WTC11 (cell line): ENCODE measurements at regions of chr1 and their contacts with region 1.

Region 1: DNA sequence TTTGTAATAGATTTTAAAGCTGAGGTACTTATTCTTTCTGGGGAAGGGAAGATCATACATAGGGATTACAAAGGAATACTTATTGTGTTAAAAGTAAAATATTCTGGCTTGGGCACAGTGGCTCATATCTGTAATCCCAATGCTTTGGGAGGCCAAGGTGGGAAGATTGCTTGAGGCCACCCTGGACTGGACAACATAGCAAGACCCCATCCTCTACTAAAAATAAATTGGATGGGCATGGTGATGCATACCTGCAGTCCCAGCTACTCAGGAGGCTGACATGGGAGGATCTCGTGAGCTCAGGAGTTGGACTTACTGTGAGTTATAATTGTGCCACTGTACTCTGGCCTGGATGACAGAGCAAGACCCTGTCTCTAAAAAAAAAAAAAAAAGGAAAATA is 27.6 kb downstream of the GABPB2 start:
- DNase-seq: no peak
- ATAC-seq: no peak
- H3K4me3 Mint-ChIP-seq: no peak overlapping the region
- H3K27ac Mint-ChIP-seq: no peak overlapping the region
- H3K4me1 Mint-ChIP-seq: no peaks in the 10 kb centered on the region
- H3K27me3 Mint-ChIP-seq: no peaks in the 10 kb centered on the region; the same call in 1 of the 2 replicates
- CTCF ChIP-seq: no peak

Region 2: GRCh38 chr1:151006327-151007052 is 91.6 kb before region 1 on chr1 and contains the start of gene MINDY1:
- CTCF ChIA-PET with region 1: interaction called, 10 read pairs
- POLR2A ChIA-PET with region 1: no interaction called
- DNase-seq: peak; percentile 73
- ATAC-seq: peak; percentile 89
- H3K4me3 Mint-ChIP-seq: peak within 1 kb of the TSS; percentile 94
- H3K27ac Mint-ChIP-seq: peak within 1 kb of the TSS; percentile 99
- H3K4me1 Mint-ChIP-seq: peaks cover 38% of the 10 kb centered on the region
- H3K27me3 Mint-ChIP-seq: no peaks in the 10 kb centered on the region
- CTCF ChIP-seq: no peak
- total RNA-seq, gene MINDY1: 10.1 to 11.2 TPM (median 11.0 TPM) in 3 replicates

Region 3: GRCh38 chr1:151070474-151071276 is 27.5 kb before region 1 on chr1 and contains the start of gene GABPB2:
- CTCF ChIA-PET with region 1: interaction called, 28 read pairs
- POLR2A ChIA-PET with region 1: interaction called, 3 read pairs
- DNase-seq: peak; percentile 93
- ATAC-seq: peak; percentile 90
- H3K4me3 Mint-ChIP-seq: peak within 1 kb of the TSS; percentile 94
- H3K27ac Mint-ChIP-seq: peak within 1 kb of the TSS; percentile 100
- H3K4me1 Mint-ChIP-seq: peaks cover 10% of the 10 kb centered on the region
- H3K27me3 Mint-ChIP-seq: no peaks in the 10 kb centered on the region
- CTCF ChIP-seq: peak; percentile 97
- total RNA-seq, gene GABPB2: 1.4 to 3.3 TPM (median 1.7 TPM) in 3 replicates

Region 4: DNA sequence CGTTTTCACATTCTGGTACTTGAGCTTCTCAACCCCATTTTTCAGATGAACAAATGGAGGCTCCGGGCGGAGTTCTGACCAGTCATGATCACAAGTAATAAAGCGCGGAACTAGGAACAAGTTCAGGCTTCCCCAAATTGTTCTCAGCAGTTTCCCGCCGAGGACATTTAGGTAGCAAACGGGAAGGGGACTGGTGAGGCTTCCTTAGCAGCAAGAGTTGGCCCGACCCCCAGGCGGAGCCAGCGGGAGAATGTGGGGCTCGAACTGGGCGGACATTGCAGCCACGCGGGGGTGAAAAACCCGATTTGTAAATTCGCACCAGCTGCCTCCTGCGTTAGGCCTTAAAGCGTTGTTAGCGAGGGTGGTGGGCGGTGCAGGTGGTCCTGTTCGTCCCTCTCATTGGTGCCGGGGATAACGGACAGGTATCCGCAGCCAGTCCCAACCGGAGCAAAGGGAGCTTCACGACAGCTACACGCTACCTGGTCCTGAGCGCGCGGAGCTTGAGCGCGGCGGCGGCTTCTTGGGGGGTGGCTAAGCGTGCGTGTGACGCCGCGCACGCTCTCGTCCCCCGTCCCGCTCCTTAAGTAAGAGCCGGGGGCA is 33.0 kb after region 1 on chr1:
- CTCF ChIA-PET with region 1: interaction called, 50 read pairs
- POLR2A ChIA-PET with region 1: interaction called, 4 read pairs
- DNase-seq: peak; percentile 96
- ATAC-seq: peak; percentile 93
- H3K4me3 Mint-ChIP-seq: peak overlapping the region; percentile 72
- H3K27ac Mint-ChIP-seq: peak overlapping the region; percentile 83
- H3K4me1 Mint-ChIP-seq: peaks cover 15% of the 10 kb centered on the region
- H3K27me3 Mint-ChIP-seq: peaks cover 43% of the 10 kb centered on the region
- CTCF ChIP-seq: no peak

Region 5: GRCh38 chr1:151175910-151176309 is 77.8 kb after region 1 on chr1 and contains the start of gene TMOD4:
- CTCF ChIA-PET with region 1: interaction called, 13 read pairs
- POLR2A ChIA-PET with region 1: no interaction called
- DNase-seq: peak; percentile 19
- ATAC-seq: peak; percentile 92
- H3K4me3 Mint-ChIP-seq: no peak within 1 kb of the TSS
- H3K27ac Mint-ChIP-seq: no peak within 1 kb of the TSS
- H3K4me1 Mint-ChIP-seq: no peaks in the 10 kb centered on the region
- H3K27me3 Mint-ChIP-seq: no peaks in the 10 kb centered on the region
- CTCF ChIP-seq: peak; percentile 51
- total RNA-seq, gene TMOD4: 0.66 to 0.82 TPM (median 0.79 TPM) in 3 replicates

Region 6: DNA sequence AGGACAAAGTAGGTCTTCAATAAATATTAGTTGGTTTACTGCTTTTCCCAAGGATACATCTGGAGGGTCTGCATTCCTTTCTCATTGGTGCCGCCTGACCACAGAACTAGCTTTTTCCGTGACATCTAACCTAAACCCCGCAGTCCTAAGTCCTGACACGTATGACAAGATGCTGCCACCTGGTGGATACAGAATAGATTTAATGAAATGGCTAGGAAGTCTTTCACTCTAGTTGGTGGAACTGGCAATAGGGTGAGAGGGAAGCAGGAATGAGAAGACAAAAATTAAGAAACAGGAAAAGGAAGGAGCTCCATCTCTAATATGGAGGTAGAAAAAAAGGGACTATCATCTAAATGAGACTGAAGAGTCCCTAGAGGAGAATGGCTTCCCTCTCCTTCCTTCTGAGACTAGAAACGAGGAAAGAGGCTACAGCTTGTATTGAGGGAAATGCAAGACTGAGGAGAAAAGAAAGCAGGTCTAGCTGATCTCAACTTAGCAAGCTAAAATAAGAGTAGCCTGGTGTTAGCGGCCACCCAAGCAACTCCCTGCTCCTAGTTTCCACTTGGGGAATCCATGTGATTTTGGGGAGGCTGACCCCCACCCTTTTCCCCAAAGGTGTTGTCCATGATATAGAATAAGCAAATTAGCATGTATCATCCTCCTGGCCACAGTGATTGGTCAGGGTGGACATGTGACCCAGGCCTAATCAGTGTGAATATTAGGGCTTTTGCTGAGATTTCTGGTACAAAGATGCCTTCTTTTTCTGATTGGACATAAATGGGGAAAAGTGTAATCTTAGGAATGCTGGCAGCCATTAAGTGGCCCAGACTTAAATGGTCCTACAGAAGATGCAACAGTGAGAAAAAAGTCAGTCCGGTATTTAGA is 243.0 kb after region 1 on chr1:
- CTCF ChIA-PET with region 1: interaction called, 13 read pairs
- POLR2A ChIA-PET with region 1: no interaction called
- DNase-seq: peak; percentile 47
- ATAC-seq: peak; percentile 88
- H3K4me3 Mint-ChIP-seq: no peak overlapping the region
- H3K27ac Mint-ChIP-seq: peak overlapping the region; percentile 58
- H3K4me1 Mint-ChIP-seq: peaks cover 5% of the 10 kb centered on the region
- H3K27me3 Mint-ChIP-seq: no peaks in the 10 kb centered on the region
- CTCF ChIP-seq: peak; percentile 50; the same call in 1 of the 2 replicates